BJ (cell line): ENCODE measurements at regions of chr9 and their contacts with region 1.

Region 1: GRCh38 chr9:129333953-129334724 is 156.1 kb upstream of the IER5L start:
- DNase-seq: peak; percentile 83
- H3K4me3 ChIP-seq: no peak overlapping the region
- H3K27me3 ChIP-seq: no peaks in the 10 kb centered on the region
- CTCF ChIP-seq: no peak; the same call in 1 of the 2 replicates

Region 2: DNA sequence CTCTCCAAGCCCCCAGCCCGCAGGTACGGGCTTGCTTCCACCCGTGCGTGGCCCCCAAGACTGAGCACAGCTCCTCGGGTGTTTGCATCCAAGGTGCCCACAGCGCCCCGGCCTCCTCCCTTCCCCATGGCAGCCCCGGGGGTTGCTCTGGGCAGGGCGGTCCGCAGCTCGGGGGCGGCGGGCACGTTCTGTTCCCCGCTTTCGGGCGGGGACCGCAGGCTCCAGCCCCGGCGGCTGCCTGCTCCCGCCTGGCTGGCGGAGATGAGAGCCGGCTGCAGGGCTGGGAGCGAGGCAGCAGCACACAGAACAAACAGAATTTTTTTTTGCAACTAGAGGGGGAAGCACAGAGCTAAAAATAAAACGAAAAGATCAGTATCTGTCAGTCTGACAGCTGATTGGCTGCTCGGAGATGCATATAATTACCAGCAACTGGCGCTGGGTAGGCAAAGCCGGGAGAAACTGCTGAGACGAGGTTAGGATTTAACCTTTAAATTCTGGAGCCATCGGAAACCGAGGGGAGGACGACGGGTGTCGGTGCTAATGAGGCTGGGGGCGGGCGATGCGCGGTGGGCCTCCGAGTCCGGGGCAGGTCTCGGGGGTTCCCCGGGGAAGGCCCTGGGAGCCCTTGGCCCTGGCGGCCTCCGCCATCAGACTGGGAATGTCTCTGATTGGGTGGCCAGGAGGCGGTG is 13.4 kb before region 1 on chr9:
- CTCF ChIA-PET with region 1: interaction called, 24 read pairs
- POLR2A ChIA-PET with region 1: interaction called, 5 read pairs
- DNase-seq: peak; percentile 72
- H3K4me3 ChIP-seq: peak overlapping the region; percentile 51
- H3K27me3 ChIP-seq: no peaks in the 10 kb centered on the region
- CTCF ChIP-seq: no peak

Region 3: DNA sequence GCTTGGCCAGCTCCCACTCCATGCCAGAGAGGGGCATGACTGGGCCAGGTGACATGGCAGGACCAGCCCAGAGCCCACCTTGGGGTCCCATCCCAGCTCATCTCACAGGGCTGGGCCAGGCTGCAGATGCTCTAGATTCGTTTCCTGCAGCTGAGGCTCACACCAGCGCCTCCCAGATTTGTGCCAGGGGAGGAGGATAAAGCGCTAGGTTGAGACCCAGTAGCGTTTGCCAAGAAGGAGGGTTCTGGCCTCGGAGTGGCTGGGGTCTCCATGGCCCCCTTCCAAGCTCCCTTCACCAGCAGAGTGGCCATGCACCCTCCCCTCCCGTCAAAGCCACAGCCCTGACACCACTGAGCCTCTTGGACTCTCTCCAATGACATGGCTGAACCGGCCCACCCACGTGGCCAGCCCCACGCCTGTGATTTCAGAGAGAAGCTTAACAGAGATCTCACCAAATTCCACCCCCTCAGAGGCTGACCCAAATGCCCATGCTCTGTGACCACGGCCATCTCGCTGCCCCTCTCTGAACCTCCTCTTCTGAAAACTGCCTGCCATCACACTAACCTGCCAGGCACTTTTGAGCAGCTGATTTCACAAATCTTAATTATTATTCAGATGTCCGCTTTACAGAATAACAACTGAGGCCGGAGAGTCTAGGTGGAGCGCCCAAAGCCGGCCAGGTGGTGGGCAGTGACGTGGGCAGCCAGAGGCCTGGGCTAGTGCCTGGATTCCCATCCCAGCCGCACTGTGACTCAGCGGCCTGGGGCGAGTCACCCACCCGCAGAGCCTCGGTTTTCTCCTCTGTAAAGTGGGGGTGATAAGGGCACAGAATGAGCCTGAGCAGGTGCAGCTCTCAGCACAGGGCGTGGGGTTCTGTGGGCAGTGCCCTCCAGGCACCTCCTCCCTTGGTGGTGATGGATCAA is 131.0 kb after region 1 on chr9:
- CTCF ChIA-PET with region 1: no interaction called
- POLR2A ChIA-PET with region 1: no interaction called
- DNase-seq: no peak
- H3K4me3 ChIP-seq: no peak overlapping the region
- H3K27me3 ChIP-seq: no peaks in the 10 kb centered on the region
- CTCF ChIP-seq: no peak